ENCODE measurements at regions of chr14 and their contacts with region 1.

Region 1: DNA sequence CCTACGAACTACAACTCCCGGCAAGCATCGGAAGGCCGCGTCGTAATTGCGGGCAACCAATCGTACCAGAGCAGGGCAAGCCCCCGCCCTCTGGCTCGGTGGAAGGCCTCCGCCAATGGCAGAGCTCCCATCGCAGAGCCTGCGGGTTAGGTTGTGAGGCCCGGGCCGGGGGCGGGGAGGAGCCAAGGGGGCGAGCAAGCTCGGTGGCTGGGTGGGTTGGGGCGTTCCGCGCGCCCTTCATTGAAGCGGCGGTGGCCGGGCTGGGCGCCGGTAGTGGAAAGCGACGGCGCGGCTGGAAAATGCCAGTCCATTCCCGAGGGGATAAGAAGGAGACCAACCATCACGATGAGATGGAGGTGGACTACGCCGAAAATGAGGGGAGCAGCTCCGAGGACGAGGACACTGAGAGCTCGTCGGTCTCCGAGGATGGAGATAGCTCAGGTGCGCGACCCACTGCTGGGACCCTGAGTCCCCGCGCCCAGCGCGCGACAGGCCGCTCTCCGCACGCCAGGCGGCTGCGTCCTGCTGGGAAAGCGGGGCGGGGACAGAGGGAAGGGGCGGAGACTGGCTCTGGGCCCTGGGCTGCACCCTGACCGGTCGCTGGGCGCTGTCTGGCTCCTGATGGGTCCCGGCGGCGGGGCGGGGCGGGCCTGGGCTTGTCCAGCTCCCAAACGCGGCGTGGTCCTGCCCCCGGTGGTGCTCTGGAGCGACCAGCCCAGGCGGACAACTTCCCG is at the start of gene BRMS1L:
- DNase-seq: peak; percentile 96
- H3K4me3 Mint-ChIP-seq: peak within 1 kb of the TSS; percentile 88
- H3K27ac Mint-ChIP-seq: peak within 1 kb of the TSS; percentile 90
- H3K4me1 Mint-ChIP-seq: peaks cover 16% of the 10 kb centered on the region
- H3K27me3 Mint-ChIP-seq: peaks cover 4% of the 10 kb centered on the region
- total RNA-seq, gene BRMS1L: 6.3 and 9.1 TPM in 2 replicates

Region 2: DNA sequence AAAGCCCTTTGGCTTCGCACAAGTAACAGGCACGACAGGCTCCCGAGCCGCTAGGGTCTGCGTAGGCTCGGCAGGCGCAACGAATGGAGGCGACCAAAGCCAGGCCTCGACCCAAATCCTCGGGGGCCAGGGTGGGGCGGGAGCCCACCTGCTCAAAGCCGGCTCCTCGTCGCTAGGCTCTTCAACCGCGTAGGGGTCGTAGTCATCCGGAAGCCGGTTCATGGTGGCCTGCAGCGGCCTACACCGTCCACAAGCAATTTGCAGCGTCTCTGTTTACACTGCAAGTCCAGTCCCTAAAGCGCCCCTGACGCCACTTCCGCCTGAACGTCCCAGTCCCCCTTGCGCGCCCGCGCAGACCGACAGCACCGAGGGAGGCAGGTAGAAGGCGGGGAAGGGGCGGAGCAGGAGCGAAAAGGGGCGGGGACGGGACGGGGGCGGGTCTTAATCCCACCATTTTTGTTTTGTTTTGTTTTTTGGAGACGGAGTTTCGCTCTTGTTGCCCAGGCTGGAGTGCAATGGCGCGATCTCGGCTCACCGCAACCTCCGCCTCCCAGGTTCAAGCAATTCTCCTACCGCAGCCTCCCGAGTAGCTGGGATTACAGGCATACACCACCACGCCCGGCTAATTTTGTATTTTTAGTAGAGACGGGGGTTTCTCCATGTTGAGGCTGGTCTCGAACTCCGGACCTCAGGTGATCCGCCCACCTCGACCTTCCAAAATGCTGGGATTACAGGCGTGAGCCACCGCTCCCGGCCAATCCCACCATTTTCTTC is 1286.8 kb before region 1 on chr14 and contains the start of gene EAPP:
- intact Hi-C with region 1: loop called (anchors 5 kb)
- DNase-seq: peak; percentile 93
- H3K4me3 Mint-ChIP-seq: peak within 1 kb of the TSS; percentile 98
- H3K27ac Mint-ChIP-seq: peak within 1 kb of the TSS; percentile 93
- H3K4me1 Mint-ChIP-seq: peaks cover 18% of the 10 kb centered on the region
- H3K27me3 Mint-ChIP-seq: no peaks in the 10 kb centered on the region
- total RNA-seq, gene EAPP: 34.4 and 35.1 TPM in 2 replicates

Region 3: GRCh38 chr14:35533357-35534207 is 292.8 kb before region 1 on chr14 and contains the start of gene INSM2:
- intact Hi-C with region 1: loop called (anchors 1 kb)
- DNase-seq: peak; percentile 55
- H3K4me3 Mint-ChIP-seq: peak within 1 kb of the TSS; percentile 73
- H3K27ac Mint-ChIP-seq: no peak within 1 kb of the TSS
- H3K4me1 Mint-ChIP-seq: peaks cover 5% of the 10 kb centered on the region
- H3K27me3 Mint-ChIP-seq: peaks cover 55% of the 10 kb centered on the region
- total RNA-seq, gene INSM2: not detected in 2 replicates

Region 4: GRCh38 chr14:35808076-35808652 is 18.2 kb before region 1 on chr14:
- intact Hi-C with region 1: loop called (anchors 1 kb)
- DNase-seq: no peak
- H3K4me3 Mint-ChIP-seq: peak overlapping the region; percentile 100
- H3K27ac Mint-ChIP-seq: peak overlapping the region; percentile 97
- H3K4me1 Mint-ChIP-seq: peaks cover 29% of the 10 kb centered on the region
- H3K27me3 Mint-ChIP-seq: peaks cover 3% of the 10 kb centered on the region

Region 5: DNA sequence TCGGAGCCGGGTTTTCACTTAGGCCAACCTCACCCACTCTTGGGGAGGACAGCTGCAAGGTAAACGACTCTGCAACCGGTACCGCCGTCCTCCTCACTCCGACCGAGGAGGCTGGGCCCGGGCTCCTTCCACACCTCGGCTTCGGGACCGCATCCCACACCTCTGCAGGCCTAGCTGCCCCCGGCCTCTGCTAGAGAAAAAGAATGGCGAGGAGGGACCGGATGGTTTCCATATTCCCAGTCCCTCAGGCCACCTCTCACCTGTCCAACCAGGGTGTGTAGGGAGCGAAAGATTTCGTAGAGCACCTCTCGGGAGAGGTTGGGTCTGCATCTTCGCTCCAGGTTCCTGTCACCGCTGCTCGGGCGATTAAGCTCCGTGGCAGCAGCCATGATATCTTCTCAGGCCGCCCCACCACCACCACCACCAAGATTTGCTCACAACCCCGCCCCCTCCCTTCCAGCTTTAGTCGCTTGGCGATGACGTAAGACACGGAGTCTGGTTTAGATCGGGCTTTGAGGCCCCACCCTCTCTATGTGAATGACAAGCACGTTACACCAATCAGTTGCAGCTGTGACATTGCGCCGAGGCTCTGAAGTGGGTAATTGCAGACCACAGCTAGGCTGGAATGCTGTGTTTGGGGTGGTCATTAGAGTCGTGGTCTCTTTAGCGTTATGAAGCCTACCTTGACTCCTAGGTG is 494.0 kb after region 1 on chr14 and contains the start of gene MBIP:
- intact Hi-C with region 1: loop called (anchors 1 kb)
- DNase-seq: peak; percentile 83
- H3K4me3 Mint-ChIP-seq: peak within 1 kb of the TSS; percentile 93
- H3K27ac Mint-ChIP-seq: peak within 1 kb of the TSS; percentile 92
- H3K4me1 Mint-ChIP-seq: peaks cover 41% of the 10 kb centered on the region
- H3K27me3 Mint-ChIP-seq: peaks cover 14% of the 10 kb centered on the region
- total RNA-seq, gene MBIP: 29.4 and 33.4 TPM in 2 replicates

Region 6: DNA sequence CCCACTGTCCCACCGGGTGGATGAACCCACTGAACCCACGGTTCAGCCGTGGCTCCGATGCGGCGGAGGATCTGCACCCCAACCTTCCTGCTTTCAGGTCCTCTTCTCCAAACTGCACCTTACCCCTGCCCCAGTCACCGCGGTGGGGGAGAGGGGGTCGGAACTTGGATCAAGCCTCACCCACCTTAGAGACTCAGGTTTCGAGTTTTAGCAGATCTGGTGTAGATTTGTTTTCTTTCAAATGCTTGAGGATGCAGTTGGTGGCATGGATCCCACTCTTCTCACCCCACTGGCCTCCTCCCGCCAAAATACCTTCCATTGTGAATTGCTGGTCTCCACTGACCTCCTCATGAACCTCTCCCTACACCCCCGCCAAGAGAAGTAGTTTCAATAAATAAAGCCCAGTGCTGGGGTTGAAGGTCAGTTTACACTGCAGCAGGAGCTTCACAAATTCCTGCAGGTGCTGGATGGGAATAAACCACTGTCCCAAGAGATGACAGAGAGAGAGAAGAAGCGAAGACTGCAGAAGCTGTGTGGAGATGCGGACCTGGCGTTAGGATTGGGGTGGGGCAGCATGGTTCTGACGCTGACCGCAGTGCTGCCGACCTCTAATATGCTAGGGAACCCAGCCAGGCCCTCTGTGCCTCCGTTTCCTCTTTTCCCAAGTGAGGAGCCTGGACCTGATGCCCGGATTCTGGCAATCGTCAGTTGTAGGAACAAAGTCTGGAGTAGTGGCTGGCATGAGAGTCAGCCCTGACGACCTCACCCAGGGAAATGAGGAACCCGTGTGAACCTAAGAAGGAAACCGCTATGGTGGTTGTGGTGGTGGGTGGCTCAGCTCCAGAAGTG is 1776.4 kb after region 1 on chr14:
- intact Hi-C with region 1: no loop called
- DNase-seq: no peak
- H3K4me3 Mint-ChIP-seq: no peak overlapping the region
- H3K27ac Mint-ChIP-seq: no peak overlapping the region
- H3K4me1 Mint-ChIP-seq: no peaks in the 10 kb centered on the region
- H3K27me3 Mint-ChIP-seq: peaks cover 28% of the 10 kb centered on the region

Measured in activated T-helper 1 cell treated with anti-CD3 and anti-CD28 coated beads, Interleukin-12 subunit alpha, Interleukin-12 subunit beta, Interleukin-2, Interleukin-4 antibody, amounts not matched to agents 30 ng/mL and 10 ng/mL and 1 ng/mL, durations not matched to agents 14 hours and 24 hours and 36 hours (primary cell).